Left colon (tissue), 2 donors: ENCODE measurements at regions of chr20 and their contacts with region 1.

Region 1: GRCh38 chr20:8389381-8390036 is 257.4 kb downstream of the PLCB1 start:
- DNase-seq: no peak
- ATAC-seq: no peak

Region 2: DNA sequence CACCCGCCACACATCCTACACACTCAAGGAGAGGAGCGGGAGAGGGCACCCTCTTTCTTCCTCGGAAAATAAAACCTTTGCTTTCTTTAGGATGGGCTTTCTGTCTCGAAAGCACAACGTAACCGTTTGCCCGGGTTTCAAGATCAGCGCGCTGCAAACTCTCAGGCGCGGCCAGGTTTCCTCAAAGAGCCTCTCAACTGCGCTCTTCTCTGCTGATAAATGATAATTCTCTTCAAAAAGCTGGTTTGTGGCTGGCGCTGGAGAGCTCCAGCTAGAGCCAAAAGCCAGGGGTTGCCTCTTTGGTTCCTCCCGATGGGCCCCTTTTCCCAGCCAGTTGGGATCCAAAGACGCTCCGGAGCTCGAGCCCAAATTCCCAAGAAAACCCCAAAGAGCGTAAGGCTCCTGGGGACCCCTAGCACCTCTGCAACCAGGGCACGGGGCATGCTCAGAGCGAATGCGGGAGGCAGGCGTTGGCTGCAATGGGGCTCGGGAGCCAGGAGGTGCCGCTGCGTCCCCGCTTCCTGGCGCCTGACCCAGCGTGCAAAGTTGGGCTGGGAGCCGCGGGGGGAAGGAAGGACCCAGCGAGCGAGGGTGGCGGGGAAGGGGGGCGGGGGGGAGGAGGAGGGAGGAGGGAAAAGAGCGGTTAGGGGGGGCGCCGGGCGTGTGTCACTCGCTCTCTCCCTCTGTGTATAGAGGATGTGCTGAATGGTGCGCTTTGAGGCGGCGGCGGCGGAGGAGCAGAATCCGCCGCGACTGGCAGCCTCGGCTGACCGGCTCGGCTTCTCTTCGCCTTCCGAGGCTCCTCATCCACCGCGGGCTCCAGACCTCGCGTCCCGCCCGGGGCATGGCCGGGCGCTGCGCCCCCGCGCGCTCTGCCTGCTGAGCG is 257.7 kb before region 1 on chr20 and contains the start of gene PLCB1:
- intact Hi-C with region 1: loop called in 1 of 2 experiments (anchors 10 kb)
- DNase-seq: peak; percentile 65 to 75
- ATAC-seq: peak; percentile 91
- total RNA-seq, gene PLCB1: 8.5 to 10.9 TPM